ENCODE measurements at regions of chr1 and their contacts with region 1.

Region 1: GRCh38 chr1:96966536-96967138 is 245.1 kb downstream of the PTBP2 start:
- DNase-seq: peak; percentile 53 to 80 (median 66)
- ATAC-seq: peak; percentile 62
- H3K4me3 ChIP-seq: no peak overlapping the region
- H3K4me3 Mint-ChIP-seq: no peak overlapping the region
- H3K27ac ChIP-seq: no peak overlapping the region
- H3K27ac Mint-ChIP-seq: no peak overlapping the region
- H3K4me1 ChIP-seq: no peaks in the 10 kb centered on the region
- H3K4me1 Mint-ChIP-seq: no peaks in the 10 kb centered on the region
- H3K27me3 ChIP-seq: peaks cover 3 to 5% of the 10 kb centered on the region in 2 experiments
- H3K27me3 Mint-ChIP-seq: peaks cover 57% of the 10 kb centered on the region
- CTCF ChIP-seq: peak; percentile 95

Region 2: GRCh38 chr1:96060622-96061021 is 906.0 kb before region 1 on chr1:
- CTCF ChIA-PET with region 1: no interaction called
- POLR2A ChIA-PET with region 1: no interaction called
- intact Hi-C with region 1: no loop called
- DNase-seq: no peak
- ATAC-seq: no peak
- H3K4me3 ChIP-seq: no peak overlapping the region
- H3K4me3 Mint-ChIP-seq: no peak overlapping the region
- H3K27ac ChIP-seq: no peak overlapping the region
- H3K27ac Mint-ChIP-seq: no peak overlapping the region
- H3K4me1 ChIP-seq: no peaks in the 10 kb centered on the region
- H3K4me1 Mint-ChIP-seq: no peaks in the 10 kb centered on the region
- H3K27me3 ChIP-seq: no peaks in the 10 kb centered on the region
- H3K27me3 Mint-ChIP-seq: no peaks in the 10 kb centered on the region
- CTCF ChIP-seq: no peak

Region 3: GRCh38 chr1:97820470-97821188 is 854.0 kb after region 1 on chr1:
- CTCF ChIA-PET with region 1: no interaction called
- POLR2A ChIA-PET with region 1: no interaction called
- intact Hi-C with region 1: loop called in 1 of 2 experiments (anchors 5 kb)
- DNase-seq: peak in 3 of 14 experiments; percentile 14 to 22 (median 15)
- ATAC-seq: no peak
- H3K4me3 ChIP-seq: no peak overlapping the region
- H3K4me3 Mint-ChIP-seq: no peak overlapping the region
- H3K27ac ChIP-seq: no peak overlapping the region
- H3K27ac Mint-ChIP-seq: no peak overlapping the region
- H3K4me1 ChIP-seq: no peaks in the 10 kb centered on the region
- H3K4me1 Mint-ChIP-seq: peaks cover 2% of the 10 kb centered on the region
- H3K27me3 ChIP-seq: no peaks in the 10 kb centered on the region
- H3K27me3 Mint-ChIP-seq: no peaks in the 10 kb centered on the region
- CTCF ChIP-seq: no peak

Region 4: DNA sequence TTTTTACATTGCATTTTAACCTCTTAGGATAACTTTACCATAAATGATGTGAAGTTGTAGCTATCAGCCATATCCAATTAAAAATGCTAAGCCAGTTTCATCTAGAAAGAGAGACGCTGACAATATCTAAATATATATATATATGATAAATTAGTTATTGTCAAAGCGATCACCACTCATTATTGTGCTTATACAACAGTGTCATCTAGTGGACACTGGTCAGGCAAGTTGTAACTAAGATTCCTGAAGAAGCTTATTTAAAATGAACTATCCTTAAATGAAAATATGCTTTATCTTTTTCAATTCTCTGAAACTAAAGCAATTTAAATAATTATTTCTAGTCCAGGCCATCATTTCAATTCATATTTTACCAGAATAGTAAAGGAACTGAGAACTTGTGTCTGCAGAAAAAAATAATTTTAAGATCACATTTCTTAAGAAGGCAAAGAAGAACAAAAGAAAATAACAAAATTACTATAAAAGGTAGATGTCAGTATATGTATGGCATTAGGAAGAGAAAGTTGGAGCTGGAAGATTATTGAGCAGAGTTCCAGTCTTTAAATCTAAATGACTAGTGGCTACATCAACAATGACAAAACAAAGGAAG is 1501.6 kb after region 1 on chr1:
- CTCF ChIA-PET with region 1: no interaction called
- POLR2A ChIA-PET with region 1: no interaction called
- intact Hi-C with region 1: loop called (anchors 5 to 10 kb)
- DNase-seq: peak in 3 of 14 experiments; percentile 44 to 53 (median 50)
- ATAC-seq: no peak
- H3K4me3 ChIP-seq: no peak overlapping the region
- H3K4me3 Mint-ChIP-seq: no peak overlapping the region
- H3K27ac ChIP-seq: no peak overlapping the region
- H3K27ac Mint-ChIP-seq: no peak overlapping the region
- H3K4me1 ChIP-seq: no peaks in the 10 kb centered on the region
- H3K4me1 Mint-ChIP-seq: no peaks in the 10 kb centered on the region
- H3K27me3 ChIP-seq: no peaks in the 10 kb centered on the region
- H3K27me3 Mint-ChIP-seq: no peaks in the 10 kb centered on the region
- CTCF ChIP-seq: no peak

Measured in CD4-positive, alpha-beta T cell (primary cell).